Posterior vena cava (tissue), 2 donors: ENCODE measurements at regions of chr21 and their contacts with region 1.

Region 1: GRCh38 chr21:20276954-20277353 is 721.3 kb upstream of the NCAM2 start:
- DNase-seq: no peak

Region 2: DNA sequence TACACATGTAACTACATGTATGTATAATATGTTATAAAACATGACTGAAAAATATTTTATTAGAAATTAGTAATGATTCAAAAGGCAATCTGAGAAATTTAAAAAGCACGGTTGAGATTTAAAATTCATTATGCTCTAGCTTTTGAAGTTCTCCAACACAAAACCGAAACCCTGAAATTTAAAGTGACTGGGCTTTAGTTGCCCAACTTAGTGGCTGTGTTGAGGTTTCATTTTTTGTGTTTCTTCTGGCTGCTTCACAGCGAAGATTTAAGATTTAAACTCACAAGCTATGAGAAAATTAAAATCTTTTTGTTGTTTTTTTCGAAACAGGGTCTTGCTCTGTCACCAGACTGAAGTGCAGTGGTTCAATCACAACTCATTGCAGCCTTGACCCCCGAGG is 1780.0 kb after region 1 on chr21:
- intact Hi-C with region 1: loop called in 1 of 2 experiments (anchors 5 kb)
- DNase-seq: no peak